Endothelial cell of umbilical vein (primary cell): ENCODE measurements at regions of chr11 and their contacts with region 1.

Region 1: DNA sequence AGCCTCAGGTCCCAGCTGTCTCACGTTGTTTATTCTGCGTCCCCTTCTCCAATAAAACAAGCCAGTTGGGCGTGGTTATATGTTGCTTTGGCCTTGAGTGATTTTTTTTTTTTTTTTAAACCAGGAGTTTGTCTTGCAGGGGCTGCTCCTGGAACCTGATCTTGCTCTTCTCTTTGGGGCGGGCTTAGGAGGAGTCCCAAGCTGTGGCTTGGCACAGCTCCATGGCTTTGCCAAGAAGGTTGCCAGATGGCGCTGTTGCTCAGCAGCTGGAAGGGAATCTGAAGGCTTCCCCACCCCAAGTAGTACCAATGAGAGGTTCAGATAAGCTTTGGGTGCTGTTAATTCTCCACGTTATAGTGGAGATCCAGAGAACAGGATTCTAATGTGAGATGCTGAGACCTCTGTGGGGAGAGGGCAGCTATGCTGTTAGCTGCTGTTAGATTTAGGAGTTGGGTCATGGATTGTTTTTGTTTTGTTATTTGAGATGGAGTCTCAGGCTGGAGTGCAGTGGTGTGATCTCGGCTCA is 2.0 kb upstream of the FERMT3 start:
- DNase-seq: peak; percentile 90
- H3K4me3 ChIP-seq: no peak overlapping the region
- H3K27ac ChIP-seq: no peak overlapping the region
- H3K4me1 ChIP-seq: peaks cover 34% of the 10 kb centered on the region
- H3K27me3 ChIP-seq: no peaks in the 10 kb centered on the region
- CTCF ChIP-seq: peak; percentile 82 to 84
- POLR2A ChIP-seq: peak; percentile 27

Region 2: DNA sequence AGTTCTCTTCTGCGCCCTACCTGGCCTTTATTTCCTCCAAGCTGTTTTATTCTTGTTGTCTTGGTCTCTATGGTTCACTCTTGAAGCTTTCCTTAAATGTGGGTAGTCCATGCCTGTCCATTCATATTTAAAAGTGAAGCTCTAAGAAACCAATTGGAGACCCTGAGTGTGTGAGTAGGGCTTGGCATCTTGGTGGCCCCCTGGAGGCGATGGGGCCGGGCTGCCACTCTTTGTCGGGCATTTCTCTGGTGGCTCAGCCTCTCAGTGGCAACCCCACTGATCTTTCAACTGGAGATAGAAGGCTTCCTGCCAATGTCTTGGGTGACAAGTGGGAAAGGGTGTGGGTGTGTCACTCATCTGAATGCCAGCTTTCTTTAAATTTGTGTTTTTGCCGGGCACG is 12.4 kb after region 1 on chr11:
- CTCF ChIA-PET with region 1: interaction called, 40 read pairs
- POLR2A ChIA-PET with region 1: interaction called, 4 read pairs
- dilution Hi-C with region 1: no loop called
- intact Hi-C with region 1: no loop called
- DNase-seq: no peak
- H3K4me3 ChIP-seq: no peak overlapping the region
- H3K27ac ChIP-seq: no peak overlapping the region
- H3K4me1 ChIP-seq: no peaks in the 10 kb centered on the region
- H3K27me3 ChIP-seq: no peaks in the 10 kb centered on the region
- CTCF ChIP-seq: no peak
- POLR2A ChIP-seq: no peak

Region 3: DNA sequence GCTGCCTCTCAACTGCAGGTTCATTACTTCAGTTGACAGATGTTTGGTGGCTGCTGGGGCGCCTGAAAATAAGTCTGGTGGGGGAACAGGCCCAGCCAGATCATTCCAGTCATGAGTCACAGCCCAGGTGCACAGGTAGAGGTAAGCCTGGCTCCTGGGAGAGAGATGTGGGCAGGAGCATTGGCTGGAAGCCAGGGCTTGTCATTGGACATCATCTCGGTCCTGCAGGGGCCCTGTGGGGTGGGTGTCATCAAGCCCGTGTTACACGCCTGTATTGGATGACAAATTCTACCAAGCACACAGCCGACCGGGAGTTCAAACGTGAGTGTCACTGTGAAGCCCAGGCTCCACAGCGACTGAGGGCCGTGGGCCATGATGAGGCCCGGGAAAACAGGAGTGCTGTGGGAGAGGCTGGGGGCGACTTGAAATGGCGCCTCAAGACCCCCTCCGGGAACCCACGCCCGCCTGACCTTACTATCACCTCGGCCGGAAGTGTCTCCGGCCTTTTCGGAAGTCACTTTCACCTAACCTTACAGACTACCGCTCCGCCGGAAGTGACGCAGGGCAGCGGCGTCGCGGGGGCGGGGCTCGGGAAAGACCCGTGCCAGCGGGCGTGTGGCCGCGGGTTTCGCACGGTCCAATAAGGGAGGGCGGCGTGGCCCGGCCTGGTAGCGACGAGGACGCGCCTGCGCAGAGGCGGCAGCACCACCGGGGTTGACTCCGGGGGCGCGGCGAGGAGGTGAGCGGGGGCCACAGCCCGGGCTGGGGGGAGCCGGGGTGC is 36.1 kb after region 1 on chr11 and contains the start of gene FKBP2:
- CTCF ChIA-PET with region 1: interaction called, 27 read pairs
- POLR2A ChIA-PET with region 1: no interaction called
- dilution Hi-C with region 1: no loop called
- intact Hi-C with region 1: loop called (anchors 1 kb)
- DNase-seq: peak; percentile 97
- H3K4me3 ChIP-seq: peak within 1 kb of the TSS; percentile 67 to 93 (median 67)
- H3K27ac ChIP-seq: peak within 1 kb of the TSS; percentile 88
- H3K4me1 ChIP-seq: peaks cover 15% of the 10 kb centered on the region
- H3K27me3 ChIP-seq: no peaks in the 10 kb centered on the region
- CTCF ChIP-seq: no peak
- POLR2A ChIP-seq: peak; percentile 1
- total RNA-seq, gene FKBP2: 48.4 and 48.5 TPM in 2 replicates

Region 4: GRCh38 chr11:64263021-64263946 is 58.8 kb after region 1 on chr11:
- CTCF ChIA-PET with region 1: interaction called, 11 read pairs
- POLR2A ChIA-PET with region 1: interaction called, 5 read pairs
- dilution Hi-C with region 1: no loop called
- intact Hi-C with region 1: no loop called
- DNase-seq: peak; percentile 85
- H3K4me3 ChIP-seq: no peak overlapping the region
- H3K27ac ChIP-seq: peak overlapping the region; percentile 83
- H3K4me1 ChIP-seq: peaks cover 35% of the 10 kb centered on the region
- H3K27me3 ChIP-seq: no peaks in the 10 kb centered on the region
- CTCF ChIP-seq: no peak
- POLR2A ChIP-seq: peak; percentile 56

Region 5: DNA sequence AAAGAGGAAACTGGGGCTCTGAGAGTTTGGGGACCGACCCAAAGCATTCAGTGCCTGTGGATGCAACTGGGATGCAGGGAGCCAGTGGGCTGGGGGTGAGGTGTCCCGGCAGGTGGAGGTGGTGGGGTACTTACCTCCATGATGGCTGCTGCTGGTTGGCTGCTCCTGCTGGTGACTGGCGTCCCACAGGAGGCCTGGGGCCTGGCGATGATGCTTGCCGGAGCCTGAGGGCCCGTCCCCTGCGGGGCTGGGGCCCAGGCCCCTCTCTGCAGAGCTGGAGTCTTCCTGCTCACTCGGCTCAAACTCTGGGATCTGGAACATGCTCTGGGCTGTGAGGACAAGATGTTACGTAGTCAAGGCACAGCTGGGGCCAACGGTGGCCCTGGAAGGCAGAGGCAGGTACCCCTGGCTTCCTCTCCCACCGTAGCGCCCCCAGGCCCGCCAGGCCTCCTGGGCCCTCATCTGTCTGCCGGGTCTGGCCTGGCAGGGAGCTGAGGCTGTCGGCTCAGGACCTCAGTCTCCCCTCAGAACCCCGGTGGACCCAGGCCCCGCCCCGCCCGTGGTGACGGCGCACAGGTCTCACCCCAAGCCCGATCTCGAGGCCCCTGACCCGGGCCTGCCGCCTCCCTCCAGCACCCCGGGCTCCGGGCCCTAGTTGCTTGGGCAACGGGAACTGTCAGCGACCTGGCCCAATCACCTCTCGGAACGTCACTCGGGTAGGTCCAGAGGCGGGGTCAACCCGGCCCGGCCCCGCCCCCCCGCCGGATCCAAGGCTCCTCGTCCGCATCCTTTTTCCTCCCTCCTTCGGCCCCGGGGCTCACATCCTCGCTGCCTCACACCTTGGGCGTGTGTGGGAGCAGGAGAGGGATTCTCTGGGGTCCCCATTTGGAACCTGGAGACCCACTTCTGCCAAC is 79.8 kb after region 1 on chr11 and contains the start of gene BAD:
- CTCF ChIA-PET with region 1: interaction called, 13 read pairs
- POLR2A ChIA-PET with region 1: no interaction called
- dilution Hi-C with region 1: no loop called
- intact Hi-C with region 1: no loop called
- DNase-seq: peak; percentile 91
- H3K4me3 ChIP-seq: peak within 1 kb of the TSS; percentile 42 to 49 (median 44)
- H3K27ac ChIP-seq: peak within 1 kb of the TSS; percentile 35
- H3K4me1 ChIP-seq: peaks cover 11% of the 10 kb centered on the region
- H3K27me3 ChIP-seq: no peaks in the 10 kb centered on the region
- CTCF ChIP-seq: no peak
- POLR2A ChIP-seq: peak; percentile 52
- total RNA-seq, gene BAD: 61.6 and 65.3 TPM in 2 replicates

Region 6: DNA sequence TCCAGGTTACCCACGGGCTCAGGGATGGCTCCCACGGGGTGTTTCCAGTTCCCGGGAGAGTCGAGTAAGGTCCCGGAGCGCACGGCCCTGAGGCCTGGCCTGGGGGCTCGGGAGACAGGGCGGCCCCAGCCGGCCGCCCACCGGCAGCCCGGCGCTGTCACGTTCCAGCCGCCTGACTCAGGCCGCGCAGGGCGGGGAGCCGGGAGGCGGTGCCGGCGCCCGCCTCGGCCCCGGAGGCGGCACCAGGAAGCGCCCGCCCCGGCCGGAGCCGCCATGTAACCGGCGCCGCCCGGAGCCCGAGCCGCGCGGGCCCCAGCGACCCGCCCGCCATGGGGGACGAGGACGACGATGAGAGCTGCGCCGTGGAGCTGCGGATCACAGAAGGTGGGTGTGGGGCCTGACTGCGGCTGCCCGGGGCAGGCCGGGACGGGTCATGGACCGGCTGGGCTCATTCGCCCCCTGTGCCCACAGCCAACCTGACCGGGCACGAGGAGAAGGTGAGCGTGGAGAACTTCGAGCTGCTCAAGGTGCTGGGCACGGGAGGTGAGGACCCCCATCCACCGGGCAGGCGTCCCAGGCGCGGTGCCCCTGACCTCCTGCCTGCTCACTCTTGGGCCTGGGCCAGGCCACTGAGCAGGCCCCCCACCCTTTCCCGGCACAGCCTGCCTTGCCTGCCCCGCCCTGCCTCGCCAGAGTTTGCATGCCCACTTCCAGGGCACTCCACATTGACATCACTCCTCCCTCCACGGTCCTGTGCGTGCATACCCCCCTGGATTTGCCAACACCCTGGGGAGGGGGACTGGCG is 154.6 kb after region 1 on chr11 and contains the start of gene RPS6KA4:
- CTCF ChIA-PET with region 1: interaction called, 58 read pairs
- POLR2A ChIA-PET with region 1: no interaction called
- dilution Hi-C with region 1: no loop called
- intact Hi-C with region 1: no loop called
- DNase-seq: peak; percentile 60
- H3K4me3 ChIP-seq: peak within 1 kb of the TSS; percentile 11 to 91 (median 33)
- H3K27ac ChIP-seq: peak within 1 kb of the TSS; percentile 70
- H3K4me1 ChIP-seq: peaks cover 22% of the 10 kb centered on the region
- H3K27me3 ChIP-seq: no peaks in the 10 kb centered on the region
- CTCF ChIP-seq: no peak
- POLR2A ChIP-seq: peak; percentile 92
- total RNA-seq, gene RPS6KA4: 41.8 and 44.1 TPM in 2 replicates